Astrocyte of the cerebellum (primary cell): ENCODE measurements at regions of chr22 and their contacts with region 1.

Region 1: GRCh38 chr22:31350410-31350863 is 4.3 kb upstream of the PATZ1 start:
- DNase-seq: no peak
- H3K4me3 ChIP-seq: no peak overlapping the region
- CTCF ChIP-seq: no peak

Region 2: DNA sequence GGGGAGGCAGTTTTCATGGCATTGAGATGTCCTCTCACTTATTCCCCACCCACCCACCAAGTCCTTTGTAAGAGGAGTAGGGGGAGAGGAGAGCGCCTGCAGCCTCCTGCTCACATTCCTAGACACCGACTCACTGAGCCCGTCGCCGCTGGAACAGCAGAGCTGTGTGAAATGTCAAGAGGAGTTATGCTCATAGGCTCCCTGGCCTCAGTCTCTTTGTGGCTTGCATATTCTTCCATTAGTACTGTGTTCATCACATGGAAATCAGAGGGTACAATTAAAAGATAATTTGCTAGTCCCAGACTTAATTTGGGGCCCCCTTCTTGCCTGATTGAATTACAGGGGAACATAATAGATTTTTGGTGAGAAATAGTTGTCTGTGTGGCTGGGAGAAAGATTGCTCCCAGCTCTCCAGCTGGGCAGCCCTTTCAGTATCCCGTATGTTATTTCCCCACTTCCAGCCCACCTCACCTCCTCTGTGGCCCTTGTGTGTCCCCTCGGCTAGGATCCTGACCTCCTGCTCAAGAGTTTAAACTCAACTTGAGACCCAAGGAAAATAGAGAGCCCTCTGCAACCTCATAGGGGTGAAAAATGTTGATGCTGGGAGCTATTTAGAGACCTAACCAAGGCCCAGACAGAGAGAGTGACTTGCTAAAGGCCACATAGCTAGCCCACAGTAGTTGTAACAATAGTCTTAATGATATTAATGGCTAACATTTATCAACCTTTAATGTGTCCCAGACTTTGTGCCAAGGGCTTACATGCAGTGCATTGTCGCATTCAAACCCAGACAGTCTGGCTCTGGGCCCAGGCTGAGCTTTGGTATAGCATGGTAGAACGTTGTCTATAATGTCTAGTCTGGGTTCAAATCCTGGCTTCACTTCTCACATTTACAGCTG is 106.1 kb before region 1 on chr22:
- in situ Hi-C with region 1: no loop called
- DNase-seq: peak; percentile 85
- H3K4me3 ChIP-seq: no peak overlapping the region
- CTCF ChIP-seq: no peak

Region 3: DNA sequence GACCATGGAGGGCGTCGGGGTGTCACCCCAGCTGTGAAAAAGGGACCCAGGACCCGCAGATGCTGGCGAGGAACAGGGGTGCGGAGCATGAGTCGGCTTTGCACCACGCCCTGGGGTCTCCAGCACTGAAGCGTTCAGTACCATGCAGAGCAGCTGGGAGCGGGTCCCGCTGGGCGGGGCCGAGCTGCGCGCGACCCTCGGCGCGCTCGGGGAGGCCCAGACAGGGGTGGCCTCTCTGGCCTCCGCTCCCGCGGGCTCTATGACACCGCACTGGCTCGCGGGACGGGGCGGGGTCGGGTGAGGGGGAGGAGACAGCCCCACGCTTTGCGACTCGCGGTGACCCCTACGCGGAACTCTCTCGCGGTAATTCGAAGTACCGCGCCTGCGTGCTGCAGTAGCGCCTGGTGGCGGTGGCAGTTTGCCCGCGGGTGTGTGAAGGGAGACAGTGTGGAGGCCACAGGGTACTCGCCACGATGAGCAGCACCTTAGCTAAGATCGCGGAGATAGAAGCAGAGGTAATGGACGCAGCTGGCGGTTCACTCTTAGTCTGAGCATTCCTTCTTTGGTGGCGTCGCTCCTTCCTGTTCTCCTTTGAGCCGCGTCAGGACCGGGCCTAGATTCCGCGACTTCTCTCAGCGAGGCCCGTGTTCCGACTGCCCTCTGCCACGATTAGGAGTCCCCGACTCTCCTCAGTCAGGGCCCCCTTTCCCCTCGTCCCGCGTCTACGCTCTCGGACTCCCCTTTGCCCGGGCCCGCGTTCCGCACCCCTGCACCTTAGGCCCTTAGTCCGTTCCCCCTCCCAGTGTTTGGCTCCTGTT is 49.0 kb after region 1 on chr22 and contains the start of gene DRG1:
- in situ Hi-C with region 1: loop called (anchors 5 kb)
- DNase-seq: peak; percentile 81
- H3K4me3 ChIP-seq: peak within 1 kb of the TSS; percentile 59
- CTCF ChIP-seq: no peak

Region 4: DNA sequence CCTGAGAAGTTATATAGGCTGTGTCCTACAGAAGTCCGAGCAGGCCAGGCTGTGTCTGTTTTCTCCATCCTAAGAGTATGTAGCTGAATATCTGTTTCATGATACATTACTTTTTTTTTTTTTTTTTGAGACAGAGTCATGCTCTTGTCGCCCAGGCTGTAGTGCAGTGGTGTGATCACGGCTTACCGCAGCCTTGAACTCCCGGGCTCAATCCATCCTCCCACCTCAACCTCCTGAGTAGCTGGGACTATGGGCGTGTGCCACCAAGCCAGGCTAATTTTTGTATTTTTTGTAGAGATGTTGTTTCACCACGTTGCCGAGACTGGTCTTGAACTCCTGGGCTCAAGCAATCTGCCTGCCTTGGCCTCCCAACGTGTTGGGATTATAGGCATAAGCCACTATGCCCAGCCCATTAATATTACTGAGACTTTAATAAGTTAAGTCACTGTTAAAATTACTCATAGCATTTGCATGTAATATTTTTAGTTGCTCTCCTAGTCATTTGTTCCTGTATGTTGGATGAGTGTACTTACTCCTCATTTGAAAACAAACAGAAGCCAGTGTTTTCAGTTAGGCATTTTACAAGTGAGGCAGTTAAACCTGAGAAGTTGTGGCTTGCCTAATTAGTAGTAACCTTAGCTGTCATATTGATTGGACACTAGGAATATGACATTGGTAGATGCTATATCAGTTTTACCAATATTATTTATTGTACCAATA is 75.1 kb after region 1 on chr22:
- in situ Hi-C with region 1: no loop called
- DNase-seq: no peak
- H3K4me3 ChIP-seq: no peak overlapping the region
- CTCF ChIP-seq: no peak

Region 5: DNA sequence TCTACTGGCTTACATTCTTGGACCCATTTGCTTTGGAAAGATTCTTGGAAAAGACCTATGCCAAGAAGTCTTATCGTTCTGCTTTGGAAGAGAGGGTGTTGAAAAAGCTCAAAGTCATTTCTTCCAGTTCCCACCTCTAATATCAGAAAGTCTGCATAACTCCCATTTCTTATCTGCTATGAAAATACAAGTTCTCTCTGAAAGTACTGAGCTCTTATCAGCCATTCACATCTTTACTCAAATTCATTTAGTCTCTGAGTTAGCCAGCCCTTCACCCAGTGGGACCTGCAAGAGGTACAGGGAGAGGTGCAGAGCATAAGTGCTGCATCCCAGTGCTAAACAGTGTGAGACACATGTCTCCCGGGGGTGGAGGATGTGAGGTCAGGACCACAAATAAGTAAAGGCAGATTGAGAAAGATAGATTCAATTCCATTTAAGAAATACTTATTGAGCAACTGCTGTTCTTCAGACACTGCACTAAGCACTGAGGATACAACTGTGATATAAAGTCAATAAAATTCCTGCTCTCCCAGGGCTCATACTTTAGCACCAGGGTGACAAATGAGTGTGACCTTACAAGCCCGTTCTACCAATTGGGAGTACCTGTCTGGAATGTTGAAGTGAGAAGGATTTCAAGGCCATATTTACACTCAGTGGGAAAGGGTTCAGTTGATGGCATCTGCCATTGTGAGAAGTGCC is 234.9 kb after region 1 on chr22:
- in situ Hi-C with region 1: no loop called
- DNase-seq: no peak
- H3K4me3 ChIP-seq: no peak overlapping the region
- CTCF ChIP-seq: no peak